SK-N-SH (cell line): ENCODE measurements at regions of chr15 and their contacts with region 1.

Region 1: DNA sequence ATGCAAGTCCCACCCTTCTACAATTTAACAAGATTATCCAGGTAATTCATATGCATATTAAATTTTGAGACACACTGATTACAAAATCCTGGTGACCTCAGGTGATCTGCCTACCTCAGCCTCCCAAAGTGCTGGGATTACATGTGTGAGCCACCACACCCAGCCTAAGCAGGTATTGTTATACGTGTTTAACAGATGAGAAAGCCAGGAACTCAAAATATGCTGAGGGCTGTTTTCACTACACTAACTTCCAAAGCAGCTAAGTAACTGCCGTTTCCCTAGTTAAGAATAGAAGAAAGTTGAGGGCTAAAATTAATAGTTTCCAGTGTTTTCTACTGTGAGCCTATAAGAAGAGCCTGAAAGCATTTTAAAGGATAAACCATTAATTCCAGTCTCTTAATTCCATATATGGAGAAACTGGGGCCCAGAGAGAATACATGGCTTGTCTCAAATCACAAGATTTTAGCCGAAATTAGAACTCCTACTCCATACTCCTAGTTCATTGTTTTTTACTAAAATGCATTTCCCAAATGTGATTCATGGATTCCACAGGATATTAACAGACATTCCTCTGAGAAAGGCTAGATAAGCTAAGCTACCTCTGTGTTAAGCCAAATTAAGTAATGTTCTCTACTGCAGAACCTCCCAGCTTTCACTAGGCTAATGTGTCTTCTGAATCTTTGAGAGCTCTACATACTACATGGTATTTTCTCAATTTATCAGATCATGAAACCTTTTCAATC is 17.0 kb upstream of the AVEN start:
- DNase-seq: no peak
- H3K4me3 ChIP-seq: no peak overlapping the region
- H3K27ac ChIP-seq: peak overlapping the region; percentile 7 to 76; a peak in 3 of 4 replicates
- H3K4me1 ChIP-seq: peaks cover 0 to 9% of the 10 kb centered on the region in 2 experiments; a peak in 1 of 4 replicates
- H3K27me3 ChIP-seq: no peaks in the 10 kb centered on the region
- CTCF ChIP-seq: no peak
- EP300 ChIP-seq: peak in 1 of 2 experiments; percentile 33; a peak in 1 of 4 replicates
- RAD21 ChIP-seq: no peak

Region 2: GRCh38 chr15:34079904-34080303 is 23.9 kb after region 1 on chr15:
- CTCF ChIA-PET with region 1: interaction called, 11 read pairs
- POLR2A ChIA-PET with region 1: no interaction called
- DNase-seq: no peak
- H3K4me3 ChIP-seq: no peak overlapping the region
- H3K27ac ChIP-seq: no peak overlapping the region
- H3K4me1 ChIP-seq: no peaks in the 10 kb centered on the region
- H3K27me3 ChIP-seq: no peaks in the 10 kb centered on the region
- CTCF ChIP-seq: no peak
- EP300 ChIP-seq: no peak
- RAD21 ChIP-seq: no peak

Region 3: GRCh38 chr15:34182942-34183341 is 126.9 kb after region 1 on chr15:
- CTCF ChIA-PET with region 1: no interaction called
- POLR2A ChIA-PET with region 1: no interaction called
- DNase-seq: no peak
- H3K4me3 ChIP-seq: no peak overlapping the region
- H3K27ac ChIP-seq: no peak overlapping the region
- H3K4me1 ChIP-seq: no peaks in the 10 kb centered on the region
- H3K27me3 ChIP-seq: no peaks in the 10 kb centered on the region
- CTCF ChIP-seq: no peak
- EP300 ChIP-seq: no peak
- RAD21 ChIP-seq: no peak

Region 4: DNA sequence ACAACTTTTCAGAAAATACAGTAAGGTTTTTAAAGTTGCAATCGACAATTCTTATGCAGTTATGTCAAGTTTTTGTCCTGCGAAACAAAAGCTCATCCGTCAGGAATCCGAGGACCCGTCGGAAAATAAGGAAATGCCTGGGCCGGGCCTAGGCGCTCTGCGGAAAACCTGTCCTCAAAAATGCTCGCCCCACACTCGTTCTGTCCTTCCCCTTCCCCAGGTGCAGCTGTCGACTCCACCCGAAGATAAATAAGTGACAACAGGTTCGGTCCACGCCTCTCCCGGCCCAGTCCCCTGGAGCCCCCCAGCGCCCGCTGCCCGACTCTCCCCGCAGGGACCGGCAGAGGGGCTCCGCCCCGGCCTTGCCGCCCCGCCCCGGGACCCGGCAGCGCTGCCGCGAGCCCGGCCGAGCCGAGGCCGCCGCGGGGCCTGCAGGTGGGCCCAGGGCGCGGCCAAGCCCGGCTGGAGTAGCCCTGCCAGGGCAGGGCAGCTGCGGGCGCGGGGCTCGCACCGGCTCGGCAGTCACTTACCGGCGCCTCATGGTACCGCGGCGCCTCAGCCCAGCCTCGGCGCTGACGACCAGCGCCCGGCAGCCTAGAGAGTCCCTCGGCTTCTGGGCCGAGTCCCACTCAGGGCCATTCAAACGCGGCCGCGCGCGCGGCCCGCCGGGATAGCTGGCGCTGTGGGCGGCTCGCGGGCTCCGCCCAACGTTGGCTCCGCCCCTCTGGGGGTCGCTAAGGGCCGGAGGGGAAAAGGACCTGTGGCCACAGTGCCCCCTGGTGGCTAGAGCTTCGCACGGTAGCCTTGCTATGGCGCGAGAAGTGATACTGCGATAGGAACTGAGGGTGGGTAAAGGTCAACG is 153.6 kb after region 1 on chr15 and contains the start of gene KATNBL1:
- CTCF ChIA-PET with region 1: interaction called, 39 read pairs
- POLR2A ChIA-PET with region 1: no interaction called
- DNase-seq: peak; percentile 97
- H3K4me3 ChIP-seq: peak within 1 kb of the TSS; percentile 86 to 98
- H3K27ac ChIP-seq: peak within 1 kb of the TSS; percentile 84 to 86
- H3K4me1 ChIP-seq: peaks cover 0 to 6% of the 10 kb centered on the region in 2 experiments; a peak in 2 of 4 replicates
- H3K27me3 ChIP-seq: no peaks in the 10 kb centered on the region
- CTCF ChIP-seq: peak; percentile 89
- EP300 ChIP-seq: no peak
- RAD21 ChIP-seq: peak; percentile 76
- polyA plus RNA-seq, gene KATNBL1: 13.8 and 20.3 TPM in 2 replicates